Naive thymus-derived CD4-positive, alpha-beta T cell (primary cell): ENCODE measurements at regions of chr3 and their contacts with region 1.

Region 1: GRCh38 chr3:88113311-88114162 is 36.2 kb upstream of the C3orf38 start:
- DNase-seq: peak in 8 of 9 donors; percentile 29 to 73 (median 62)
- ATAC-seq: peak; percentile 95
- H3K4me3 ChIP-seq: no peak overlapping the region
- H3K4me3 Mint-ChIP-seq: no peak overlapping the region
- H3K27ac ChIP-seq: no peak overlapping the region
- H3K27ac Mint-ChIP-seq: peak overlapping the region in 3 of 9 donors; percentile 28 to 68 (median 32)
- H3K4me1 ChIP-seq: no peaks in the 10 kb centered on the region
- H3K4me1 Mint-ChIP-seq: peaks cover 6 to 35% (median 26%) of the 10 kb centered on the region in 7 donors
- H3K27me3 ChIP-seq: no peaks in the 10 kb centered on the region
- H3K27me3 Mint-ChIP-seq: no peaks in the 10 kb centered on the region

Region 2: GRCh38 chr3:87298111-87298718 is 815.3 kb before region 1 on chr3:
- CTCF ChIA-PET with region 1: interaction called, 5 read pairs
- POLR2A ChIA-PET with region 1: no interaction called
- intact Hi-C with region 1: loop called in 1 of 2 experiments (anchors 1 kb)
- DNase-seq: peak in 5 of 9 donors; percentile 24 to 38 (median 28)
- ATAC-seq: peak; percentile 67
- H3K4me3 ChIP-seq: no peak overlapping the region
- H3K4me3 Mint-ChIP-seq: no peak overlapping the region
- H3K27ac ChIP-seq: no peak overlapping the region
- H3K27ac Mint-ChIP-seq: no peak overlapping the region
- H3K4me1 ChIP-seq: no peaks in the 10 kb centered on the region
- H3K4me1 Mint-ChIP-seq: peaks cover 0 to 4% (median 0%) of the 10 kb centered on the region in 7 donors
- H3K27me3 ChIP-seq: no peaks in the 10 kb centered on the region
- H3K27me3 Mint-ChIP-seq: peaks cover 0 to 9% (median 0%) of the 10 kb centered on the region in 5 donors

Region 3: DNA sequence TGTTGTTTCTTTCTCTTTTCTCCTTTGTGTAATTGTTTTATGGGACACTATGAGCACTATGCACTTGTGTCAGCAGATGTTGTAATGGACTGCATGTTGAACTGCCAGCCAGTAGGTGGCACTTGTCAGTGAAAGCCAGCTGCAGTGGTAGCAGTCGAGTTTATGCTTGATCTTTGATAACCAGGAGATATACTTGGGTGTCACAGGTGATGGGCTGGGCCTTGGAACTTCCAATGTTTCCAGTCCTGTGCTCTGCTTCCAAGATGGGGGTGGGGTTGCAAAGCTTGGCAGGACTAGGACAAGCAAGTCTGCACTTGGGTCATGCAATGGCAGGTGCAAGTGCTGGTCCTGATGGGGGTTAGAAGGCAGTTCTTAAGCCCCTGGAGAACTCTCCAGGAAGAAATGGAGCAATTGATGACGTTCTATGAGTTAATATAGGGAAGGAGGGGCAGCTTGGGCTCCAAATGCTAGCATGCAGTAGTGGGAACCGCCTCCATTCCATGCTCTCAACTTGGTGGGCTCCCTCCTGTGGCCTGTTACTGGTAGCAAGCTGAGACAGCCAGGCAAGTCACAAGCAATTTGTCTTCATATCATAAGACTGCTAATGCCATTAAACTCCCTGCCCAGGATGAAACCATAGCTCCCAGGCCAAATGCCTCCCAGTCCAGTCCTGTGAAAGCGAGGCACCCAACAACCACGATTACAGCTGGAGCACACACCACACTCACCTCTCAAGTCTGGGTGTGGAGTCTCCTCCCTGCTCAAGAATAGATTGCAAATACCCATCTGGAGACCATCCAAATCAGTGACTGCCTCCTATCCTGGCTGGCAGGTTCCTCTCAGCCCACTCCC is 342.0 kb before region 1 on chr3:
- CTCF ChIA-PET with region 1: interaction called, 18 read pairs
- POLR2A ChIA-PET with region 1: no interaction called
- intact Hi-C with region 1: loop called (anchors 1 kb)
- DNase-seq: peak in 7 of 9 donors; percentile 14 to 51 (median 39)
- ATAC-seq: peak; percentile 83
- H3K4me3 ChIP-seq: no peak overlapping the region
- H3K4me3 Mint-ChIP-seq: no peak overlapping the region
- H3K27ac ChIP-seq: no peak overlapping the region
- H3K27ac Mint-ChIP-seq: no peak overlapping the region
- H3K4me1 ChIP-seq: no peaks in the 10 kb centered on the region
- H3K4me1 Mint-ChIP-seq: peaks cover 0 to 2% (median 0%) of the 10 kb centered on the region in 7 donors
- H3K27me3 ChIP-seq: no peaks in the 10 kb centered on the region
- H3K27me3 Mint-ChIP-seq: peaks cover 0 to 30% (median 19%) of the 10 kb centered on the region in 5 donors

Region 4: DNA sequence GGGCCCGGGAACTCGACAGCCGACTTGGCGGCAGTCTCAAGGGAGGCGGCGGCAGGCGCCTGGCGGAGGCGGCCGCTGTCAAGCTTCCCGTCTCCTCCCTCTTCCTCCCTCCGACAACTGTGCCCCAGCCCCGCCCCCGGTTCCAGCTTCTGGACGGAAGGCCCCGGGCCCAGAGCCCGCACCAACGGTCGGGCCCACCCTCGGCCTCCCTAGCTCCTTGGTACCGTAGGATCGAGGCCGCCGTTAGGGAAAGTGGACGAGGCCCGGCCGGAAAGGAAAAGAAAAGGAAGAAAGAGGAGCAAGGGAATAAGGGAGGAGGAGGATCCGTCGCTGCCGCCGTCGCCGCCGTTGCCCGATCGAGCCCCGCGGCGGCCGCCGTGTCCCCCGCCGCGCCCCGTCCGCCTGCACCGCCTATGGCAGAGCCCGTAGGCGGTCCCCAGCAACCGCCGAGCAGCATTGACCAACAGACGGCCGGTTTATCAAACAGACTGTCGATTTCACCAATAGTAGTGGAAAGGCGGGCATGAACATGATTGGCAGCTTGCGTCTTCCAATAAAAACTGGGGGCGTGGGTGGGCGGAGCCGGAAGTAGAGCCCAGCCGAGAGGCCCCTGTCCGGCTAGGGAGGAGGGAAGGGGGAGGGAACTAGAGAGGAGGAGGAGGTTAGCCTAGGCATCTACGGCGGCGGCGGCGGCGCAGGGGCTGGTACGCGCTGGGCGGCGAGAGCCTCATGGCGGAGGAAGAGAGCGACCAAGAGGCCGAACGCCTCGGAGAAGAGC is 54.8 kb before region 1 on chr3 and contains the starts of genes CGGBP1 and ZNF654:
- CTCF ChIA-PET with region 1: no interaction called
- POLR2A ChIA-PET with region 1: no interaction called
- intact Hi-C with region 1: loop called (anchors 1 kb)
- DNase-seq: peak; percentile 95 to 100 (median 99)
- ATAC-seq: peak; percentile 94
- H3K4me3 ChIP-seq: peak within 1 kb of the TSS; percentile 87
- H3K4me3 Mint-ChIP-seq: peak within 1 kb of the TSS; percentile 95 to 100 (median 98)
- H3K27ac ChIP-seq: peak within 1 kb of the TSS; percentile 81
- H3K27ac Mint-ChIP-seq: peak within 1 kb of the TSS; percentile 90 to 99 (median 96)
- H3K4me1 ChIP-seq: peaks cover 16 to 28% of the 10 kb centered on the region in 2 donors
- H3K4me1 Mint-ChIP-seq: peaks cover 47 to 73% (median 63%) of the 10 kb centered on the region in 7 donors
- H3K27me3 ChIP-seq: no peaks in the 10 kb centered on the region
- H3K27me3 Mint-ChIP-seq: no peaks in the 10 kb centered on the region
- total RNA-seq, gene CGGBP1: 87.0 to 153 (median 115) TPM
- total RNA-seq, gene ZNF654: 11.4 to 32.2 (median 25.4) TPM

Region 5: GRCh38 chr3:88149509-88150362 is 36.2 kb after region 1 on chr3 and contains the start of gene C3orf38:
- CTCF ChIA-PET with region 1: interaction called, 4 read pairs
- POLR2A ChIA-PET with region 1: interaction called, 4 read pairs
- intact Hi-C with region 1: loop called in 1 of 2 experiments (anchors 2 kb)
- DNase-seq: peak; percentile 74 to 88 (median 85)
- ATAC-seq: peak; percentile 96
- H3K4me3 ChIP-seq: peak within 1 kb of the TSS; percentile 88
- H3K4me3 Mint-ChIP-seq: peak within 1 kb of the TSS; percentile 93 to 99 (median 98)
- H3K27ac ChIP-seq: peak within 1 kb of the TSS; percentile 94
- H3K27ac Mint-ChIP-seq: peak within 1 kb of the TSS; percentile 97 to 99 (median 99)
- H3K4me1 ChIP-seq: peaks cover 13 to 17% of the 10 kb centered on the region in 2 donors
- H3K4me1 Mint-ChIP-seq: peaks cover 16 to 46% (median 43%) of the 10 kb centered on the region in 7 donors
- H3K27me3 ChIP-seq: no peaks in the 10 kb centered on the region
- H3K27me3 Mint-ChIP-seq: no peaks in the 10 kb centered on the region
- total RNA-seq, gene C3orf38: 28.9 to 40.2 (median 34.7) TPM